ENCODE measurements at regions of chr16 and their contacts with region 1.

Region 1: DNA sequence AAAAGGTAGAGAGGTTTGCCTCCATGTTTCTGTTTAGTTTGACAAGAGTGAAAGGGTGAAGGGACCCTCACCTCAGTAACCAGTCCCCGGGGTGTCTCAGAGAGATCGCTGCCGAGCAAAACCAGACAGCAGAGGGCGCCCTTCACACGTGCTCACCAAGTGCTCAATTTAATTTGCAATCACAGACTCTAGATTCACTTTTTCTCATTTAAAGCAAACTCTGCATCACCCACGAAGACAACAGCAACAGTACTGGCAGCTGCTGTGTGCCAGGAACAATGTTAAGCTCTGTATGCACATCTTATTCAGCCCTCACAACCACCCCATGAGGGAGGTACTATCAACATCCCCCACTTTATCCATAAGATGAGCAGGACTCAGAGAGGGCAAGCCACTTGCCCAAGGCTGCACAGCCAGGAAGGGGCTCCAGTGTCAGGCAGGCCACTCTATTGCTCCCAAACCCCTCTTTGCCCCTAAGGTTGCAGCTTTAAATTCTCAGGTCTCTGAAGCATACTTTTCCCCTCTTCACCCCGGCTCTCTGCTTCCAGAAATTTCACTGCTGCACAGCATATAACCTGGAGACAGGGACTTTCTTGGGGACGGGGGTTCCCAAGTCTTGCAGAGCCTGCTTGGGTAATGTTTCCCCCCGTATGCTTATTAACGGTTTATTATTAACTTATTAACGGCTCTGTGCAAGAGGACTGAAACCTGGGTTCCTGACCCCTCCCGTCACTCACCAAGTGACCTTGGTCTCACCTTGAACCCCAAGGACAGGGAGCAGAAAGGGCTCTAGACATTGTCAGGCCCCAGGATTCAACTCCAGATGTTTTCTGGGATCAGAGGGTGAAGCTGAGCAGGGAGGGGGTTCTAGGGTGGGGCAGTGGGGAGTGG is 70.9 kb downstream of the CNGB1 start:
- DNase-seq: peak; percentile 79
- CTCF ChIP-seq: peak; percentile 87

Region 2: DNA sequence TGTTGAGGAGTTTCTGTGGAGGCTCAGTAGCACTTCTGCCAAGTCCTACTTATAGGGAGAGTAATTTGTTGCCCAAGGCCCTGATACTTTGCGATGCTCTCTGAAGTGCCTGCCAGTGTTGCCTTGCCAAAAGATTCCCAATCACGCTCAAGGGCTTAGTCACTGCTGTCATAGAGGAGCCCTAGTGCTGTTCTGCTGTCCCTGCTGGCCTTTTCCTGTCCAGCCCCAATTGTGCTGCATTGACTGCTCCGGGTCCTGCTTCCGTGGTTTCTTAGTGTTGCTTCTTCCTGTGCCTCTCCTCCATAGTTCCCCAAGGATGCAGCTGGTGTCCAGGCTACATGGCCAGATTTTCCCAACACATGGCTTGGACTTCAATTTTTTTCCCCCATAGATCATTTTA is 1156.2 kb before region 1 on chr16:
- in situ Hi-C with region 1: no loop called
- DNase-seq: no peak
- CTCF ChIP-seq: no peak

Region 3: GRCh38 chr16:58000706-58001676 is 101.0 kb after region 1 on chr16 and contains the start of gene USB1:
- in situ Hi-C with region 1: loop called (anchors 10 kb)
- DNase-seq: peak; percentile 98
- CTCF ChIP-seq: peak; percentile 91

Region 4: GRCh38 chr16:58767581-58767980 is 867.6 kb after region 1 on chr16:
- in situ Hi-C with region 1: no loop called
- DNase-seq: no peak
- CTCF ChIP-seq: no peak